ENCODE measurements at regions of chr9 and their contacts with region 1.

Region 1: GRCh38 chr9:123225374-123225813 is 43.0 kb downstream of the STRBP start:
- DNase-seq: no peak
- H3K4me3 ChIP-seq: no peak overlapping the region
- H3K27ac ChIP-seq: no peak overlapping the region
- H3K4me1 ChIP-seq: no peaks in the 10 kb centered on the region
- H3K27me3 ChIP-seq: no peaks in the 10 kb centered on the region
- CTCF ChIP-seq: peak in 1 of 3 donors; percentile 33
- POLR2A ChIP-seq: no peak

Region 2: GRCh38 chr9:123257276-123257675 is 31.9 kb after region 1 on chr9:
- intact Hi-C with region 1: loop called (anchors 2 kb)
- DNase-seq: no peak
- H3K4me3 ChIP-seq: no peak overlapping the region
- H3K27ac ChIP-seq: no peak overlapping the region
- H3K4me1 ChIP-seq: no peaks in the 10 kb centered on the region
- H3K27me3 ChIP-seq: no peaks in the 10 kb centered on the region
- CTCF ChIP-seq: no peak
- POLR2A ChIP-seq: no peak

Region 3: GRCh38 chr9:124754289-124754688 is 1528.9 kb after region 1 on chr9:
- intact Hi-C with region 1: no loop called
- DNase-seq: no peak
- H3K4me3 ChIP-seq: no peak overlapping the region
- H3K27ac ChIP-seq: no peak overlapping the region
- H3K4me1 ChIP-seq: peaks cover 0 to 5% of the 10 kb centered on the region in 2 donors
- H3K27me3 ChIP-seq: no peaks in the 10 kb centered on the region
- CTCF ChIP-seq: no peak
- POLR2A ChIP-seq: no peak